K562 (cell line): ENCODE measurements at regions of chr4 and their contacts with region 1.

Region 1: GRCh38 chr4:47686294-47686872 is 151.5 kb downstream of the CORIN start:
- DNase-seq: peak; percentile 58 to 69 (median 63)
- ATAC-seq: peak; percentile 97
- H3K4me3 ChIP-seq: no peak overlapping the region
- H3K27ac ChIP-seq: no peak overlapping the region
- H3K4me1 ChIP-seq: no peaks in the 10 kb centered on the region
- H3K27me3 ChIP-seq: no peaks in the 10 kb centered on the region
- CTCF ChIP-seq: peak; percentile 79 to 84 (median 83)
- EP300 ChIP-seq: no peak
- POLR2A ChIP-seq: no peak
- RAD21 ChIP-seq: peak; percentile 64 to 73

Region 2: GRCh38 chr4:47135210-47135609 is 551.2 kb before region 1 on chr4:
- CTCF ChIA-PET with region 1: no interaction called
- POLR2A ChIA-PET with region 1: no interaction called
- in situ Hi-C with region 1: no loop called
- intact Hi-C with region 1: no loop called
- DNase-seq: no peak
- ATAC-seq: no peak
- H3K4me3 ChIP-seq: no peak overlapping the region
- H3K27ac ChIP-seq: no peak overlapping the region
- H3K4me1 ChIP-seq: no peaks in the 10 kb centered on the region
- H3K27me3 ChIP-seq: no peaks in the 10 kb centered on the region
- CTCF ChIP-seq: no peak
- EP300 ChIP-seq: no peak
- POLR2A ChIP-seq: no peak
- RAD21 ChIP-seq: no peak

Region 3: DNA sequence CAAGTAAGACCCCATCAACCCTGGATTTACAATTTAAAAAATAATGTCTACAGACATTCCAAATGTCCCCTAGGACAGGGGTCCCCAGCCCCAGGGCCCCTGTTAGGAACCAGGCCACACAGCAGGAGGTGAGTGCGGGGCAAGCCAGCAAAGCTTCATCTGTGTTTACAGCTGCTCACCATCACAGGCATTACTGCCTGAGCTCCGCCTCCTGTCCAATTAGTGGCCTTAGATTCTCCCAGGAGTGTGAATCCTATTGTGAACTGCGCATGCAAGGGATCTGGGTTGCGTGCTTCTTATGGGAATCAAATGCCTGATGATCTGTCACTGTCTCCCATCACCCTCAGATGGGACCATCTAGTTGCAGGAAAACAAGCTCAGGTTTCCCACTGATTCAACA is 55.2 kb before region 1 on chr4:
- CTCF ChIA-PET with region 1: no interaction called
- POLR2A ChIA-PET with region 1: no interaction called
- in situ Hi-C with region 1: no loop called
- intact Hi-C with region 1: no loop called
- DNase-seq: no peak
- ATAC-seq: no peak
- H3K4me3 ChIP-seq: no peak overlapping the region
- H3K27ac ChIP-seq: no peak overlapping the region
- H3K4me1 ChIP-seq: no peaks in the 10 kb centered on the region
- H3K27me3 ChIP-seq: no peaks in the 10 kb centered on the region
- CTCF ChIP-seq: no peak
- EP300 ChIP-seq: no peak
- POLR2A ChIP-seq: no peak
- RAD21 ChIP-seq: no peak

Region 4: GRCh38 chr4:47836641-47837093 is 150.3 kb after region 1 on chr4:
- CTCF ChIA-PET with region 1: no interaction called
- POLR2A ChIA-PET with region 1: no interaction called
- in situ Hi-C with region 1: no loop called
- intact Hi-C with region 1: loop called (anchors 2 kb)
- DNase-seq: peak; percentile 14 to 52 (median 34)
- ATAC-seq: peak; percentile 97
- H3K4me3 ChIP-seq: no peak overlapping the region
- H3K27ac ChIP-seq: no peak overlapping the region
- H3K4me1 ChIP-seq: peaks cover 0 to 13% of the 10 kb centered on the region in 2 experiments; a peak in 2 of 5 replicates
- H3K27me3 ChIP-seq: no peaks in the 10 kb centered on the region
- CTCF ChIP-seq: peak; percentile 57 to 69 (median 60)
- EP300 ChIP-seq: no peak
- POLR2A ChIP-seq: no peak
- RAD21 ChIP-seq: peak in 1 of 2 experiments; percentile 52; a peak in 2 of 4 replicates

Region 5: DNA sequence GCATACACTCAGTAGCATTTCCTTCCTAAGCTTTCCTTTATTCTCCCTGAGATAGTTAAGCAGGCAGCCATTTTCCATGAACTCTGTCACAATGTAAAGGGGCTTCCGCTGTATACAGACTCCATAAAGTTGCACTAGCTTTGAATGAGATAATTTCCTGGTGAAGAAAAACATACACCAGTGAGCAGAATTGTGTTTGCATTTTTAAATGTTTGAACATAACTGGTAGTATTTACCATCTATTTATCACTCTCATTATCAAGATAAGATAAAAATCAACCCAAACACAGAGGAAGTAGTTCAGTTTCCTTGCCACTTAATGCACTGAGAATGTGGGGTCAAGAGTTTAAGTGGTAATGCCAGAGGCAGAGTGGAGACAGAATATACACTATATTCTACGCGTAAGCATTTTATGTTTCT is 393.6 kb after region 1 on chr4:
- CTCF ChIA-PET with region 1: no interaction called
- POLR2A ChIA-PET with region 1: no interaction called
- in situ Hi-C with region 1: loop called (anchors 10 kb)
- intact Hi-C with region 1: no loop called
- DNase-seq: no peak
- ATAC-seq: no peak
- H3K4me3 ChIP-seq: no peak overlapping the region
- H3K27ac ChIP-seq: no peak overlapping the region
- H3K4me1 ChIP-seq: no peaks in the 10 kb centered on the region; a peak in 1 of 5 replicates
- H3K27me3 ChIP-seq: no peaks in the 10 kb centered on the region
- CTCF ChIP-seq: no peak
- EP300 ChIP-seq: no peak
- POLR2A ChIP-seq: no peak
- RAD21 ChIP-seq: no peak